Spleen (tissue), 13 donors: ENCODE measurements at regions of chr16 and their contacts with region 1.

Region 1: GRCh38 chr16:22787466-22788189 is 26.3 kb upstream of the HS3ST2 start:
- DNase-seq: no peak
- H3K4me3 ChIP-seq: no peak overlapping the region
- H3K27ac ChIP-seq: no peak overlapping the region
- H3K4me1 ChIP-seq: peaks cover 0 to 10% (median 2%) of the 10 kb centered on the region in 6 donors
- H3K27me3 ChIP-seq: no peaks in the 10 kb centered on the region
- CTCF ChIP-seq: no peak
- POLR2A ChIP-seq: no peak

Region 2: GRCh38 chr16:22770866-22771265 is 16.8 kb before region 1 on chr16:
- intact Hi-C with region 1: loop called (anchors 2 kb)
- DNase-seq: no peak
- H3K4me3 ChIP-seq: no peak overlapping the region
- H3K27ac ChIP-seq: no peak overlapping the region
- H3K4me1 ChIP-seq: no peaks in the 10 kb centered on the region
- H3K27me3 ChIP-seq: peaks cover 0 to 69% (median 5%) of the 10 kb centered on the region in 7 donors
- CTCF ChIP-seq: no peak
- POLR2A ChIP-seq: no peak

Region 3: DNA sequence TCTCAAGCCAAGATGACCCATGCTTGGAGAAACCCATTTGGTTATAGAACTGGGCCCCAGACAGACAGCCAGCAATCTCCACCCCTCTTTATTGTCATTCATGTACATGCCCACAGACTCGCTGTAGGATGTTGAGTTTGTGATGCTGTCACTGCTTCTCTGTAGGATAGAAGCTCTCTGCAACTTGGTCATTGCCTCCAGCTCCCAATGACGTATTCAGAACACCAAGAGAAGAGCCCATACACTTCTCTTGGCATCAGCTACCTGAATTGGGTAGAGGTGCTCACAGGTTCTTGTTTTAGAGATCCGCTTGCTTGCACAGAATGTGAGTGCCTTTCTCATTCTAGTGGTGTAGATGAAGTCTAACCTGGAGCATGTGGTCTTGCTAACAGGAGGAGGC is 42.4 kb after region 1 on chr16:
- intact Hi-C with region 1: no loop called
- DNase-seq: no peak
- H3K4me3 ChIP-seq: no peak overlapping the region
- H3K27ac ChIP-seq: no peak overlapping the region
- H3K4me1 ChIP-seq: no peaks in the 10 kb centered on the region
- H3K27me3 ChIP-seq: peaks cover 0 to 31% (median 0%) of the 10 kb centered on the region in 7 donors
- CTCF ChIP-seq: no peak
- POLR2A ChIP-seq: no peak